Activated CD4-positive, alpha-beta memory T cell treated with anti-CD3 and anti-CD28 coated beads, Interleukin-2, amount 10 ng/mL, durations not matched to agents 7 days and 5 days (primary cell): ENCODE measurements at regions of chr2 and their contacts with region 1.

Region 1: DNA sequence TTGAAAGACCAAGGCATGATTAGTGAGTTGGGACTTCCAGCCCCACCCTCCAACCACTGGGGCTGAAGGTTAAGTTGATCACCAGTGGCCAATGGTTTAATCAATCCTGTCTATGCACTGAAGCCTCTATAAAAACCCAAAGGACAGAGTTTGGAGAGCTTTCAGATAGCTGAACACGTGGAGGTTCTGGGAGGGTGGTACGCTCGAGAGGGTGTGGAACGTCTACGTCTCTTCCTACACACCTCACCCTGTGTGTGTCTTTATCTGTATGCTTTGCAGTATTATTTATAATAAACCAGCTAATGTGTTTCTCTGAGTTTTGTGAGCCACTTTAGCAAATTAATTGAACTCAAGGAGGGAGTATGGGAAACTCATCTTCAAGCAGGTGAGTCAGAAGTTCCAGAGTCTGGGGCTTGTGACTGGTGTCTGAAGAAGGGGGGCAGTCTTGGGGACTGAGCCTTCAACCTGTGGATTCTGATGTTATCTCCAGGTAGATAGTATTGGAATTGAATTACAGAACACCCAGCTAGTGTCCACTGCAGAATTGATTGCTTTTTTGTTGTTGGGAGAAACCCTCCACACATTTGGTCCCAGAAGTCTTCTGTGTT is 20.3 kb downstream of the ACTR3 start:
- DNase-seq: no peak
- H3K4me3 Mint-ChIP-seq: no peak overlapping the region
- H3K27ac Mint-ChIP-seq: peak overlapping the region; percentile 47
- H3K4me1 Mint-ChIP-seq: peaks cover 72% of the 10 kb centered on the region
- H3K27me3 Mint-ChIP-seq: no peaks in the 10 kb centered on the region

Region 2: DNA sequence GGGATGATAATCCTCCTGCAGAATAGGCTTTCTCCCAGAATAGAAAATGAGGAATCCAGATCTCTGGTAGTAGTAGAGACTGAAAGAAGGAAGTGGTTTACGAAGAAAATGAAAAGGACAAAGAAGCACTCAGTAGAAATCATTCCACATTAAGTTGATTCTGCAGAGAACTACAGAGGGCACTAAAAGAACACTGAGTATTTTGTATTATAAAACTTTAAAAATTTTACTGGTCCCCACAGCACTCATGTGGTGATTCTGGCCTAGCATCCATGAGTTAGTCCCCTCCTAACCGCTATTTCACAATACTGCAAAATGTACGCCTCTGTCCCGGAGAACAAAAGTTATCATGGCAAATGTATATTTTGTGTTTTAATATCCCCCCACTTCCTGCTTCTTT is 110.8 kb before region 1 on chr2:
- CTCF ChIA-PET with region 1: no interaction called
- POLR2A ChIA-PET with region 1: no interaction called
- DNase-seq: no peak
- H3K4me3 Mint-ChIP-seq: no peak overlapping the region
- H3K27ac Mint-ChIP-seq: no peak overlapping the region
- H3K4me1 Mint-ChIP-seq: peaks cover 1% of the 10 kb centered on the region
- H3K27me3 Mint-ChIP-seq: peaks cover 1% of the 10 kb centered on the region

Region 3: GRCh38 chr2:113896791-113897190 is 13.4 kb before region 1 on chr2:
- CTCF ChIA-PET with region 1: interaction called, 4 read pairs
- POLR2A ChIA-PET with region 1: interaction called, 10 read pairs
- DNase-seq: no peak
- H3K4me3 Mint-ChIP-seq: no peak overlapping the region
- H3K27ac Mint-ChIP-seq: no peak overlapping the region
- H3K4me1 Mint-ChIP-seq: peaks cover 92% of the 10 kb centered on the region
- H3K27me3 Mint-ChIP-seq: no peaks in the 10 kb centered on the region